Sigmoid colon (tissue), 7 donors: ENCODE measurements at regions of chr1 and their contacts with region 1.

Region 1: GRCh38 chr1:147172168-147172992 is at the start of gene PRKAB2:
- DNase-seq: peak; percentile 98
- H3K4me3 ChIP-seq: peak within 1 kb of the TSS; percentile 71 to 97 (median 76)
- H3K27ac ChIP-seq: peak within 1 kb of the TSS; percentile 91 to 96 (median 95)
- H3K4me1 ChIP-seq: peaks cover 0 to 51% (median 36%) of the 10 kb centered on the region in 4 donors
- H3K27me3 ChIP-seq: no peaks in the 10 kb centered on the region
- CTCF ChIP-seq: peak; percentile 75 to 89 (median 81)
- EP300 ChIP-seq: peak in 1 of 4 donors; percentile 42
- POLR2A ChIP-seq: peak; percentile 80
- total RNA-seq, gene PRKAB2: 33.5 to 40.3 (median 38.5) TPM

Region 2: DNA sequence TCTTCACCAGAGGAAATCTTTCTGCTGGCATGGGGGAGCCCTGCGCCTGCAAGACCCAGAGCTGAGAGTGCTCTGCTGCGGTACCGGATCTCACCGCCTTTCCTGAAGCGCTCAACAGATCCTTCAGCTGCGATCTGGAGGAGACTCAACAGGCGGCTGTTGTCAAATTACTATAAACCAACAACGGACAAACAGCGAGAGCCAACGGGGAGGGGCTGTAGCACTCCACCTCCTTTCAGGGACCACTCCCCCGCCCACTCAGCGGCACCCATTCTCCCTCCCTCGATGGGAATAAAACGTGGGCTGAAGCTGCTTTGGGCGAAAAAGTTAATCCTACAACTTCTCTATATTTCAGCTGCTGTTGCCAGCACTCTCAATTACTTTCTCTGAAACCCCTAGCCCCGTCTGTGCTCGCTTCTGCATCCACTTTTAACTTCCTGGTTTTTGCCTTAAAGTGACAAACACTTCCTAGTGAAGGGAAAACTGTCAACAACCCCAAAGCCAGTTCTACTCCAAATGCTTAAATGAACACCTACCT is 52.9 kb after region 1 on chr1 and contains the start of gene FMO5:
- intact Hi-C with region 1: loop called (anchors 1 kb)
- DNase-seq: peak; percentile 89
- H3K4me3 ChIP-seq: peak within 1 kb of the TSS; percentile 44 to 70 (median 67)
- H3K27ac ChIP-seq: peak within 1 kb of the TSS; percentile 73 to 81 (median 78)
- H3K4me1 ChIP-seq: peaks cover 0 to 5% (median 0%) of the 10 kb centered on the region in 4 donors
- H3K27me3 ChIP-seq: no peaks in the 10 kb centered on the region
- CTCF ChIP-seq: peak; percentile 21 to 54 (median 36)
- EP300 ChIP-seq: no peak
- POLR2A ChIP-seq: no peak
- total RNA-seq, gene FMO5: 1.9 to 7.1 (median 3.2) TPM